Colonic mucosa (tissue), 4 donors: ENCODE measurements at regions of chr19 and their contacts with region 1.

Region 1: DNA sequence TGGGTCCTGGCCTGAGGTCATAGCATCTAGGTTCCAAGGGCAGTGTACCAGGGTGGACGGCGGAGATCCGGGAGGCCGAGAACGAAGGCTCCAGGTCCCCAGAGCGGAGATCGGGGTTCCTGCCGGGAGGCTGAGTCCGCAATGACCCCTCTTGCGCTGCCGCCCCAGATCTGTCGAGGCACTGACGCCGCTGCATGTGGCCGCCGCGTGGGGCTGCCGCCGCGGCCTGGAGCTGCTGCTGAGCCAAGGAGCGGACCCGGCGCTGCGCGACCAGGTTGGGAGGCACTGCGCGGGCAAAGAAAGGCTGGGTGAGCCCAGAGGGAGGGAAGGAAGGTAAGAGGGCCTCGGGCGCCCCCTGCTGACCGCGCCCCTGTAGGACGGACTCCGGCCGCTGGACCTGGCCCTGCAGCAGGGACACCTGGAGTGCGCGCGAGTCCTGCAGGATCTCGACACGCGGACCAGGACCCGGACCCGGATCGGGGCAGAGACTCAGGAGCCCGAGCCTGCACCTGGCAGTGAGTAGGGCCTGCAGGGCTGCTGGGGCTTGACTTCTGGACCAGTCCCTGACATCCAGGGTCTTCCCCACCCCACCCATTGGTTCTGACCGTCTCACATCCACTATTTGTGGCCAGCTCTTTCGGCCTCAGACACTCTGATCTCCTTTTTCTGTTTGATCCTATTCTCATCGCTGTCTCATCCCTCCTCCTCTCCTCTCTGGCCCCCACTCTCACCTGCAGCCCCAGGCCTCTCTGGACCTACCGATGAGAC is 971 bp downstream of the ANKLE1 start:
- DNase-seq: peak; percentile 87
- H3K4me3 ChIP-seq: peak overlapping the region; percentile 24
- H3K27ac ChIP-seq: no peak overlapping the region
- H3K4me1 ChIP-seq: peaks cover 12% of the 10 kb centered on the region
- H3K27me3 ChIP-seq: peaks cover 8% of the 10 kb centered on the region
- CTCF ChIP-seq: peak; percentile 93

Region 2: GRCh38 chr19:17069218-17069617 is 213.5 kb before region 1 on chr19:
- intact Hi-C with region 1: loop called (anchors 2 kb)
- DNase-seq: no peak
- H3K4me3 ChIP-seq: no peak overlapping the region
- H3K27ac ChIP-seq: no peak overlapping the region
- H3K4me1 ChIP-seq: no peaks in the 10 kb centered on the region
- H3K27me3 ChIP-seq: no peaks in the 10 kb centered on the region
- CTCF ChIP-seq: no peak

Region 3: DNA sequence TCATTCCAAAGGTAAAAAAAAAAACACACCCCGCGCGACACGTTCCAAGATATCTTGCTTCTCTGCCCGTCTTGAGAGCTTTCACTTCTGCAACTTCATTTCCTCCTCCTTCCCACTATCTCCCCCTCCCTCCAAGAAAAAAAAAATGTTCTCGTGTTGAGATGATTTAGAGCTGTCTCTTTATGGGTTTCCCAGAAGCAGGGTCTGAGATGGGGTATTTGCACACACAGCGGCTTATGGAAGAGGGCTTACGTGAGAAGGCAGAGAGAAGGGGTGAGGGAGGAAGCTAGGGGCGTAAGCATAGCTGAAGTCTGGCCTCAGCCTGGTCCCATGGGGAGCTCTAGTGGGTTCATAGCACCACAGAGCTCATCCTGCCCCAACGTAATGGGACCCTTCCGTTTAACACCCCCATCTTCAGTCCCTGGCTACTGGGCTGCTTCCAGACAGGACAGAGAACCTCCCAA is 98.8 kb before region 1 on chr19:
- intact Hi-C with region 1: no loop called
- DNase-seq: no peak
- H3K4me3 ChIP-seq: no peak overlapping the region
- H3K27ac ChIP-seq: peak overlapping the region; percentile 21
- H3K4me1 ChIP-seq: no peaks in the 10 kb centered on the region
- H3K27me3 ChIP-seq: no peaks in the 10 kb centered on the region
- CTCF ChIP-seq: no peak

Region 4: GRCh38 chr19:17205237-17206140 is 77.2 kb before region 1 on chr19:
- intact Hi-C with region 1: loop called (anchors 2 kb)
- DNase-seq: peak; percentile 75
- H3K4me3 ChIP-seq: no peak overlapping the region
- H3K27ac ChIP-seq: no peak overlapping the region
- H3K4me1 ChIP-seq: no peaks in the 10 kb centered on the region
- H3K27me3 ChIP-seq: no peaks in the 10 kb centered on the region
- CTCF ChIP-seq: peak; percentile 60

Region 5: GRCh38 chr19:17305517-17306284 is 23.0 kb after region 1 on chr19 and contains the start of gene MRPL34:
- intact Hi-C with region 1: no loop called
- DNase-seq: peak; percentile 97
- H3K4me3 ChIP-seq: peak within 1 kb of the TSS; percentile 72
- H3K27ac ChIP-seq: peak within 1 kb of the TSS; percentile 93
- H3K4me1 ChIP-seq: peaks cover 22% of the 10 kb centered on the region
- H3K27me3 ChIP-seq: no peaks in the 10 kb centered on the region
- CTCF ChIP-seq: peak; percentile 63
- total RNA-seq, gene MRPL34: 127 to 184 TPM